CD4-positive, alpha-beta T cell (primary cell): ENCODE measurements at regions of chr11 and their contacts with region 1.

Region 1: DNA sequence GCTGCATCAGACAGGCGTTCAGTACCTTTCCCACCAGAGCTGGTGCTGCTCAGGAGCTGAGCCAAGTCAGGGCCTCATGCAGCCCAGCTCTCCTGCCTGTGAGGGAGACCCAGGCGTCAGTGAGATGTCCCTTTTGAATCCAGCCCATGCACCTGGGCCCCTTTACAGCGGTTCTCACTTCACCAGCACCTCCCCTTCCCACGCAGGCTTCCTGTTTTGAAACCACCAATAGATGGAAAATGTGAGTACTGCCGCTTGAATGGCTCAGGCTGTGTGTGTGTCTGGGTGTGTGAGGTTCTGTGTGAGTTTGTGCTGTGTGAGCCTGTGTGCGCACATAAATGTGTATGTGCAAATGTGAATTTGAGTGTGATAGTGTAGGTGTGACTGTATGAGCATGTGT is 88.4 kb downstream of the UBASH3B start:
- DNase-seq: peak; percentile 36 to 92 (median 70)
- ATAC-seq: peak; percentile 71
- H3K4me3 ChIP-seq: peak overlapping the region; percentile 34
- H3K4me3 Mint-ChIP-seq: no peak overlapping the region
- H3K27ac ChIP-seq: peak overlapping the region; percentile 66 to 71
- H3K27ac Mint-ChIP-seq: no peak overlapping the region
- H3K4me1 ChIP-seq: peaks cover 77% of the 10 kb centered on the region
- H3K4me1 Mint-ChIP-seq: peaks cover 36% of the 10 kb centered on the region
- H3K27me3 ChIP-seq: no peaks in the 10 kb centered on the region
- H3K27me3 Mint-ChIP-seq: no peaks in the 10 kb centered on the region
- CTCF ChIP-seq: no peak

Region 2: DNA sequence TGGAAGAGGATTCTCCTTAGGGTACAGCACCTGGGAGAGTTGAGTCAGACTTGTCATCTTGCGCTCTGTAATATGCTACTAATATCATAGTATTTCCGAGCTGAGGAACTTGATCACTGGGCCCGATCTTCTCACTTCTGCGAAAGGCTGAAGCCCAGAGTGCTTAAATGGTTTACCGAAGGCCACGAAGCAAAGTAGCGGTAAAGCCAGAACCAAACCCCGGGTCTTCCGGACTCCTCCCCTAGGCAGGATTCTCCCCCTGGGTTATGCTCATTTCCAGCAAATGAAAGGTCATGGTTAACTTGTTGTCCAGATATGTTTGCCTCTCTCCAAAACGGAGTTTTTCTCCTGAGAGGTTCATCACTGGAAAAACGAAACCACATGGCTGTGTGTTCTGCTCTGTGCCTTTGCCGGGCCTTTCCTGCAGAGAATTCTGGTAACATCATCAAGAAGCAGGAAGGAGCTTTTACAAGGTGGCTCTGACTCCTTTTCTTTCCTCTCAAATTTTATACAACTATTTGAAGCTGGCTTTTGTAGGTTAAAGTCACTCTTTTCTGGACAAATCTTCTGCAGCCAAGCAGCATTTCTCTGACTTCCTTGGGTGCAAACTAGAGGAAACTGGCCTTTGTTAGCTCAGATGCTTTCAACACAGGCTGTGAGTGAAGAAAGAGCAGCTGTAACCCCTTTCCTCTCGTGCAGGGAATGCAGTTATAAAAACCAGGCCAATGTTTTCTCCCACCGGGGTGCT is 53.0 kb before region 1 on chr11:
- CTCF ChIA-PET with region 1: interaction called, 6 read pairs
- POLR2A ChIA-PET with region 1: interaction called, 69 read pairs
- intact Hi-C with region 1: loop called in 1 of 2 experiments (anchors 2 kb)
- DNase-seq: peak in 4 of 14 experiments; percentile 23 to 45 (median 40)
- ATAC-seq: peak; percentile 68
- H3K4me3 ChIP-seq: peak overlapping the region; percentile 34
- H3K4me3 Mint-ChIP-seq: peak overlapping the region; percentile 84
- H3K27ac ChIP-seq: peak overlapping the region; percentile 46 to 71
- H3K27ac Mint-ChIP-seq: peak overlapping the region; percentile 87
- H3K4me1 ChIP-seq: peaks cover 76% of the 10 kb centered on the region
- H3K4me1 Mint-ChIP-seq: peaks cover 84% of the 10 kb centered on the region
- H3K27me3 ChIP-seq: no peaks in the 10 kb centered on the region
- H3K27me3 Mint-ChIP-seq: no peaks in the 10 kb centered on the region
- CTCF ChIP-seq: no peak

Region 3: GRCh38 chr11:122703541-122704272 is 40.2 kb before region 1 on chr11:
- CTCF ChIA-PET with region 1: interaction called, 3 read pairs
- POLR2A ChIA-PET with region 1: interaction called, 69 read pairs
- intact Hi-C with region 1: loop called in 1 of 2 experiments (anchors 5 kb)
- DNase-seq: peak in 1 of 14 experiments; percentile 34
- ATAC-seq: no peak
- H3K4me3 ChIP-seq: no peak overlapping the region
- H3K4me3 Mint-ChIP-seq: peak overlapping the region; percentile 65
- H3K27ac ChIP-seq: no peak overlapping the region
- H3K27ac Mint-ChIP-seq: no peak overlapping the region
- H3K4me1 ChIP-seq: peaks cover 36% of the 10 kb centered on the region
- H3K4me1 Mint-ChIP-seq: peaks cover 62% of the 10 kb centered on the region
- H3K27me3 ChIP-seq: no peaks in the 10 kb centered on the region
- H3K27me3 Mint-ChIP-seq: no peaks in the 10 kb centered on the region
- CTCF ChIP-seq: no peak

Region 4: GRCh38 chr11:122727101-122727929 is 16.6 kb before region 1 on chr11:
- CTCF ChIA-PET with region 1: no interaction called
- POLR2A ChIA-PET with region 1: interaction called, 14 read pairs
- intact Hi-C with region 1: loop called (anchors 2 kb)
- DNase-seq: peak in 10 of 14 experiments; percentile 11 to 64 (median 41)
- ATAC-seq: peak; percentile 74
- H3K4me3 ChIP-seq: peak overlapping the region; percentile 41
- H3K4me3 Mint-ChIP-seq: peak overlapping the region; percentile 80
- H3K27ac ChIP-seq: peak overlapping the region; percentile 58 to 91
- H3K27ac Mint-ChIP-seq: peak overlapping the region; percentile 95
- H3K4me1 ChIP-seq: peaks cover 74% of the 10 kb centered on the region
- H3K4me1 Mint-ChIP-seq: peaks cover 57% of the 10 kb centered on the region
- H3K27me3 ChIP-seq: no peaks in the 10 kb centered on the region
- H3K27me3 Mint-ChIP-seq: no peaks in the 10 kb centered on the region
- CTCF ChIP-seq: no peak

Region 5: DNA sequence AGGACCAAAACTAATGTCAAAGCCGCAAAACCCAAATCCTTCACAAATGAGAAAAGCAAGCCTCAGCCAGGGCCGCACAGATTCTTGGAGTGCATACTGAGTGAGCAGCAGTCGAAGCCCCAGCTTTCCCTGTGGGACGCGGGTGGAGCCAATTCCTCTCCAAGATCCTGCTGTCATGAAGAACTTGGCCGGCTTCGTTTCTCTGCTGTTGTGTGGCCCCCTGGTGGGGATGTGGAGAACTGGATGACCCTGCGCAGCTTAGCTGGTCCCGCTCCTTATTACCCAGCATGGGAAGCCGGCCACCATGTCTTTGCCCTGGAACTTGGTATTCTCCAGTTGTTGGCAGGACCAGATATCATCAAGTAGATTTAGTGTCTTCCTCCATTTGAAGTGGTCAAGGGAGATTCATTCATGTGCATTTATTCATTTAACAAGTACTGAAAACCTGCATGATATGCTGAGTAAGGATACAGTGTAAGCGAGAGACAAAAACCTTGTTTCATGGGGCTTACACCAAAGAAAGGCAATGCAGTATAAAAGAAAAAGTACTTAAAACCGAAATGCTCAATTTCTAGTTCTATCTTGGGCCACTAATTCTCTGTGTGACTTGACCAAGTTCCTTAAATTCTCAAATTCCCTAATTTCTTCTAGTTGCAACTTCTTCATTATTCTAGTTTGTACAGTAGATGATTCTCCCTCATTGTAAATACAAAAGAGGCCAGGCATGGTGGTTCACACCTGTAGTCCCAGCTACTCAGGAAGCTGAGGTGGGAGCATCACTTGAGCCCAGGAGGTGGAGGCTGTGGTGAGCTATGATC is 37.6 kb after region 1 on chr11:
- CTCF ChIA-PET with region 1: no interaction called
- POLR2A ChIA-PET with region 1: no interaction called
- intact Hi-C with region 1: no loop called
- DNase-seq: peak; percentile 52 to 85 (median 71)
- ATAC-seq: peak; percentile 80
- H3K4me3 ChIP-seq: no peak overlapping the region
- H3K4me3 Mint-ChIP-seq: no peak overlapping the region
- H3K27ac ChIP-seq: no peak overlapping the region
- H3K27ac Mint-ChIP-seq: no peak overlapping the region
- H3K4me1 ChIP-seq: no peaks in the 10 kb centered on the region
- H3K4me1 Mint-ChIP-seq: peaks cover 12% of the 10 kb centered on the region
- H3K27me3 ChIP-seq: no peaks in the 10 kb centered on the region
- H3K27me3 Mint-ChIP-seq: no peaks in the 10 kb centered on the region
- CTCF ChIP-seq: peak; percentile 91